ENCODE measurements at regions of chr22 and their contacts with region 1.

Region 1: DNA sequence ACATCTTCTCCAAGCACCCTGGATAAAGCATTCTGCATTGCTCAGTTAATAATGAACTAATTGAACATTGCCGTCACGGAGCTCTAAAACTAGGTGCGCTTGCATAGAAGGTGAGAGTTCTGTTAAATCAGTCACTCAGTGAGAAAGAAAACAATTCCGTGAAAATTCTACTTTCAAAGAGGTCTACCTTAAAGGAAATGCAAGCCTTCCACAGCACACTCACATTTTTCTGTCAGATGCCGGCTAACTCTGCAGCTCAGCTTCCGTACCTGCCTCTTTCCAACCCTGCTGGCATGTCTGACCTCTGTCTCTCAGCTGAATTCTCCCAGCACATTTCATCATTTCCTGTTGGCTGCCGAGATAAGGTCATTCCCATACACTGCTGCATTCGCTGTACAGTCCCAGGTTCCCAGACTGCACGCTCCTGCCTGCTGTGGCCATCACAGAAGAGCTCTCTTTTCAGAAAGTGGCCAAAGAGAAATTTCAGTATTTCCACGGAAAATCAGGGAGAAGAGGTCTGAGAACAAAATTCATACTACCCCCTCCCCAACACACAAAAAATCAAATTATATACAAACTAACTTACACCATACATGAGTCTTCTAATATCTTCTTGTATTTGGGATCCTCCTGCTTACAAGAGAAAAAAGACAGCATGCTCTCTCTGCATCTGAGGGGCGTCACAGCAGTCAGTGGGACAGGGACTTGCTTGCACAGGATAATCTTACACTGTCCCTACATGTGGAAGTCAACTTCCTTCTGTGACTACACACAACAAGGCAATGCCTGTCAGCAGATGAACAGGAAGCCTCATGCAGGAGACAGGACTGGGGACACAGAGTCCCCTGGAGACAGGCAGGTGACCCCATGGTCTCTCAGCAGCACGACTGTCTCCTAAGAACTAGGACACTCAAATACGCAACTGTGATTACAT is 55.1 kb downstream of the PACSIN2 start:
- DNase-seq: no peak
- ATAC-seq: peak; percentile 32
- H3K4me3 Mint-ChIP-seq: no peak overlapping the region
- H3K27ac Mint-ChIP-seq: peak overlapping the region; percentile 60
- H3K4me1 Mint-ChIP-seq: peaks cover 46% of the 10 kb centered on the region
- H3K27me3 Mint-ChIP-seq: no peaks in the 10 kb centered on the region

Region 2: GRCh38 chr22:42901790-42902508 is 57.9 kb before region 1 on chr22:
- CTCF ChIA-PET with region 1: no interaction called
- POLR2A ChIA-PET with region 1: no interaction called
- DNase-seq: peak; percentile 28
- ATAC-seq: peak; percentile 30
- H3K4me3 Mint-ChIP-seq: no peak overlapping the region
- H3K27ac Mint-ChIP-seq: no peak overlapping the region
- H3K4me1 Mint-ChIP-seq: no peaks in the 10 kb centered on the region
- H3K27me3 Mint-ChIP-seq: no peaks in the 10 kb centered on the region

Region 3: GRCh38 chr22:42912059-42912458 is 47.8 kb before region 1 on chr22:
- CTCF ChIA-PET with region 1: no interaction called
- POLR2A ChIA-PET with region 1: no interaction called
- DNase-seq: no peak
- ATAC-seq: no peak
- H3K4me3 Mint-ChIP-seq: no peak overlapping the region
- H3K27ac Mint-ChIP-seq: no peak overlapping the region
- H3K4me1 Mint-ChIP-seq: peaks cover 5% of the 10 kb centered on the region
- H3K27me3 Mint-ChIP-seq: no peaks in the 10 kb centered on the region

Region 4: DNA sequence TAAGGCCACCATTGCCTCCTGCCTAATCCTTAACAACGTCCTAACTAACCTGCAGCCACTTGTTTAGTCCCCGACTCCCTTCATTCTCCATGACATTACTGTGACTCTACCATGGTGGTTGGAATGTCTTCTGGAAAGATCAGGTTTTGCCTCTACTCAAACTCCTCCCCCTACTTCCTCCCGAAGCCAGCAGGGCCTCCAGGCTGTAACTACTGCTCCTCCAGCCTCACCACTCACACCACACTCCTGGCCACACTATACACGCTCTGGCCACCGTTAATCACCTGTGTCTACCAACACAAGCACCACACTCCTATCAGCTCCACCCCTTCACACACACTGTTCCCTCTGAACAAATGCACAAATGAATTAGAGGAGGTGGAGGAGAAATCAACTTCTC is 14.1 kb before region 1 on chr22:
- CTCF ChIA-PET with region 1: interaction called, 11 read pairs
- POLR2A ChIA-PET with region 1: interaction called, 7 read pairs
- DNase-seq: no peak
- ATAC-seq: peak; percentile 58
- H3K4me3 Mint-ChIP-seq: no peak overlapping the region
- H3K27ac Mint-ChIP-seq: no peak overlapping the region
- H3K4me1 Mint-ChIP-seq: peaks cover 36% of the 10 kb centered on the region
- H3K27me3 Mint-ChIP-seq: no peaks in the 10 kb centered on the region